GM13977 (cell line): ENCODE measurements at regions of chr2 and their contacts with region 1.

Region 1: GRCh38 chr2:191150600-191151330 is at the start of gene STAT4:
- DNase-seq: peak; percentile 73
- CTCF ChIP-seq: peak; percentile 6

Region 2: GRCh38 chr2:191051825-191052778 is 98.7 kb before region 1 on chr2:
- in situ Hi-C with region 1: loop called (anchors 10 kb)
- DNase-seq: peak; percentile 44
- CTCF ChIP-seq: peak; percentile 59

Region 3: GRCh38 chr2:191280304-191280703 is 129.5 kb after region 1 on chr2:
- in situ Hi-C with region 1: no loop called
- DNase-seq: no peak
- CTCF ChIP-seq: no peak

Region 4: DNA sequence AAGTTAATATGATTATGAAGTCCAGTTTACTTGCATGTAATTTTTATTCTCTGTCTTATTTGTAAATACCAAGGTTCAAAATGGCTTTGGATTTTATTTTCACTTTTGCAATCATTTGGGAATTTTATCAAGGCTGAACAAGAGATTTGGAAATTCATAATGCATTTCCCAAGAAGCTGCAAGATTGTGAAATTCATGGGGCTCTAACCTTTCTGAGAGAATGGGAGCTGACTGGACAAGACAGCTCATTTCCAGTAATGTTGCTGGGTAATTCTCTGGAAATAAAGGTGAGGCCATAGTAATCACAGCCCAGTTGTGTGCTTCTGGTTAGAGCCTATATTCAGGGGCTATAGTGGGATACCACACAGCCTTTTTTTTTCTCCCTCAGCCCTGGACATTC is 505.6 kb after region 1 on chr2:
- in situ Hi-C with region 1: no loop called
- DNase-seq: no peak
- CTCF ChIP-seq: no peak